Kidney (tissue), 22 donors: ENCODE measurements at regions of chr10 and their contacts with region 1.

Region 1: DNA sequence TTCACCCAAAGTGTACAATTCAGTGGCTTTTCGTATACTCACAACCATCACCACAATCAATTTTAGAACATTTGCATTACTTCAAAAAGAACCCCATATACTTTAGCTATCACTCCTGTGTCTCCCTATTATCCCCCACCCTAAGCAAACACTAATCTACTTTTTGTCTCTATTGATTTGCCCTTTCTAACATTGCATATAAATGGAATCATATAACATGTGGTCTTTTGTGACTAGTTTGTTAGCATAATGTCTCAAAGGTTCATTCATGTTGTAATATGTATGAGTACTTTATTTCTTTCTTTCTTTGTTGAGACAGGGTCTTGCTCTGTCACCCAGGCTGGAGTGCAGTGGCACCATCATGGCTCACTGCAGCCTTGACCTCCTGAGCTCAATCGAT is 21.0 kb upstream of the DNAJC12 start:
- DNase-seq: no peak
- H3K4me3 ChIP-seq: no peak overlapping the region
- H3K27ac ChIP-seq: no peak overlapping the region
- H3K4me1 ChIP-seq: no peaks in the 10 kb centered on the region
- H3K27me3 ChIP-seq: no peaks in the 10 kb centered on the region
- CTCF ChIP-seq: no peak

Region 2: DNA sequence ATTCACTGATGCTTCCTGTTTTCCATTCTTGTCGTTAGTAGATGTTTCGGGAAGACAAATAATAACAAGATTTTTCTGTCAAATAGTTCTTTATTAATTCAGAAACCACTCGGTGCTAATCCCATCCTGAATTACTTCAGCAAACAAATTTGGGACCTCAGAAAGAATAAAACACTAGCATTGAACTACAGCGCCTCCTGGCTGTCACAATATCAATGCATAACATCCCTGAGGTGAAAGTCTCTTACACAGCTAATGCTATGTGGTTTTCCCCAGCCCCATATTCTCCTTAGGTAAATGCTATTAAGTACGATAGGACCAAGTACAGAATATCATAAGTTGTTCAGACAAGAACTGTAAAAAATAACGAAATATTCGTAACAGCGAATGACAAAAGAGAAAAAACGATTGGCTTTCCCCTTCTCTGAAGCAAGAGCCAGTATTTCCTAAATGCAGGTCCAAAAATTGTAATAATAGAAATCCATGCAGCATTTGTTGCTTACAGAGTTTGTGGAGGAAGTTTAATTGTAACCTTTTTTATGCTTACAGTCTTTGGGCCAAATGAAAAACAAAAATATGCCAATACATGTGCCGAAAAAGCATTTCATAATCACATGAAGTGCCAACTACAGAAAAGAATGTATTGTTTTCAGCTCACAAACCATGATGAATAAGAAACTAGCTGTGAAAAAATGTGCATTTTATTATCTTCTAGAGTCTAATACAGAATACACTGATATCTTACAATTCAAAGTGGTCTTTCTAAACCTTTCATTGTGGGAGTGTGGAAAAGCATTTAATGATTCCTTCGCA is 297.6 kb after region 1 on chr10:
- intact Hi-C with region 1: loop called (anchors 5 kb)
- DNase-seq: peak in 4 of 5 donors; percentile 45 to 87 (median 70)
- H3K4me3 ChIP-seq: no peak overlapping the region
- H3K27ac ChIP-seq: no peak overlapping the region
- H3K4me1 ChIP-seq: peaks cover 0 to 5% (median 4%) of the 10 kb centered on the region in 3 donors
- H3K27me3 ChIP-seq: no peaks in the 10 kb centered on the region
- CTCF ChIP-seq: peak; percentile 70